ENCODE measurements at regions of chr10 and their contacts with region 1.

Region 1: GRCh38 chr10:72331601-72332422 is 22.9 kb downstream of the DNAJB12 start:
- DNase-seq: peak; percentile 85
- CTCF ChIP-seq: no peak

Region 2: GRCh38 chr10:71927776-71928592 is 403.8 kb before region 1 on chr10:
- in situ Hi-C with region 1: loop called (anchors 25 kb)
- DNase-seq: no peak
- CTCF ChIP-seq: no peak

Region 3: GRCh38 chr10:72126184-72126871 is 205.5 kb before region 1 on chr10:
- in situ Hi-C with region 1: loop called (anchors 25 kb)
- DNase-seq: no peak
- CTCF ChIP-seq: peak; percentile 35

Region 4: GRCh38 chr10:72254813-72255568 is 76.8 kb before region 1 on chr10:
- in situ Hi-C with region 1: loop called (anchors 10 kb)
- DNase-seq: peak; percentile 55
- CTCF ChIP-seq: peak; percentile 3

Region 5: DNA sequence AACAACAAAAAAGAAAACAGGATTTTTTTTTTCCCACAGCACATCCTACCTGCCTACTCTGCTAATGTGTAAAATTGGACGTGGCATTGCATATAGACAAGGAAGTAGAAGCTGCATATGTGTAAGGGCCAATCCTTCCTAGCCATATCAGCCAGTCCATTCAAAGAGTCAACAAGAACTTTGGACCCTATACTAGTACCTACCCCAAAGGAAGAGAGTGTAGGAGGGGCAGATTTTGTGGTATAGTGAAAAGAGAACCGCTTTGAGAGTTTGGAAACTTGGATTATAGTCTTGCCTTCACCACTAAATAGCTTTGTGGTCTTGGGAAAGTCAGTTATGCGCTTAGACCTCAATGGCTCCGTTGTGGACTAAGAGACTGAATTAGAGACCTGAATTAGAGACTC is 348.0 kb after region 1 on chr10:
- in situ Hi-C with region 1: no loop called
- DNase-seq: no peak
- CTCF ChIP-seq: no peak

Region 6: DNA sequence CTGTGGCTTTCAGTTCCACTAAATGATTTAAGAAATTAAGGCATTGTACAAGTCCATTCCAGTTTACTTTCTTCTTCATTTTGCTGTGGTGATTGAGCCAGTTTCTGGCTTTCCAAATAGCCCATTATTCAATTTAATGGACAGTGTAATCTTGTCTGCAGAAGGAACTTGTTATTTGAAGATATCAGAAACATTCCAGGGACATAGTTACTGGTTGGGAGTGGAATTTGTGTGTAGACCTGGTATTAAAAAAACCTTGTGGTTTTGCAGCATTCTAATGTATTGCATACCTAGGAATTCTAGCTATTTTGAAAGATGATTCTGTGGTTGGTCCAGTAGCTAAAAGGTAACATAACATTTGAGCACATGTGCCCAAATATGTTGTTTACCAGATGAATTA is 432.3 kb after region 1 on chr10:
- in situ Hi-C with region 1: no loop called
- DNase-seq: no peak
- CTCF ChIP-seq: no peak